Panc1 (cell line): ENCODE measurements at regions of chr5 and their contacts with region 1.

Region 1: GRCh38 chr5:159581502-159582249 is 251.4 kb upstream of the IL12B start:
- DNase-seq: peak; percentile 92
- ATAC-seq: peak; percentile 89
- H3K4me3 ChIP-seq: no peak overlapping the region
- H3K27ac ChIP-seq: no peak overlapping the region
- H3K4me1 ChIP-seq: 0 out of 2 replicates have a peak, but pooled peaks cover 3% of the 10 kb centered on the region
- H3K27me3 ChIP-seq: no peaks in the 10 kb centered on the region
- CTCF ChIP-seq: peak; percentile 10; the same call in 1 of the 2 replicates

Region 2: GRCh38 chr5:159773062-159773924 is 191.6 kb after region 1 on chr5:
- CTCF ChIA-PET with region 1: no interaction called
- POLR2A ChIA-PET with region 1: no interaction called
- in situ Hi-C with region 1: no loop called
- intact Hi-C with region 1: loop called (anchors 10 kb)
- DNase-seq: peak; percentile 15
- ATAC-seq: peak; percentile 92
- H3K4me3 ChIP-seq: peak overlapping the region; percentile 44 to 57
- H3K27ac ChIP-seq: no peak overlapping the region
- H3K4me1 ChIP-seq: no peaks in the 10 kb centered on the region; the same call in none of the 2 replicates
- H3K27me3 ChIP-seq: no peaks in the 10 kb centered on the region
- CTCF ChIP-seq: peak; percentile 73